ENCODE measurements at regions of chr6 and their contacts with region 1.

Region 1: GRCh38 chr6:42782622-42783176 is 847 bp downstream of the BICRAL start:
- DNase-seq: peak; percentile 65 to 96 (median 78)

Region 2: DNA sequence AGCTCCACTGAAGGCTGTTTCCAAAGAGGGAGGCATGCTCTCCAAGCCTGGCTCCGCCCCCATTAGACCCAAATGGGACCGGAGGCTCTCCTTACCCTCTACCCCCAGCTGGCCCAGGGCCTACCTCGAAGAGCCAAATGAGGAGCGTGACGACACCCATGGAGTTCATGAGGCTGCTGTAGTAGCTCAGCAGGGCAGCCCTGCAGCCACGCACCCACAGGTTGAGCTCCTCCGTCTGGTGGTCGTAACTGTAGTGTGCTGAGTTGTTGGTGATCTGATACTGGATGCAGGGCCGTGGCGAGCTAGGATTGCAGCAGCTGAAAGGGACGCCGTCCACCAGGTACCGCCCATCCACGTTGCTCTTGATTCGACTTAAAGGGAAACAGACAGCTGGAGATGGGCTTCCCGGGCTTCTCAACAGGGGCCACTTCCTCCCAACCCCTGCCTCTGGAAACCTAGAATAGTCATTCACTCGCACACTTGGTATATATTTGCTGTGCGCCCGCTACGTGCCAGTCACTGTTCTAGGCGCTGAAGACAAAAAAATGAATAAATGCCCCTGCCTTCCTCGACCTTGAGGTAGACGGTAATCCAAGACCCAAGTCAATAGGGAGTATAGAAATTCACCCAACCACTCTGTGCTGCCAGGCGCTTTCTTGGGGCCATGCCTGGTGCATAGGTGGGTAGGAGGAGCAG is 78.3 kb before region 1 on chr6:
- intact Hi-C with region 1: no loop called
- DNase-seq: peak in 5 of 10 donors; percentile 14 to 71 (median 38)

Region 3: DNA sequence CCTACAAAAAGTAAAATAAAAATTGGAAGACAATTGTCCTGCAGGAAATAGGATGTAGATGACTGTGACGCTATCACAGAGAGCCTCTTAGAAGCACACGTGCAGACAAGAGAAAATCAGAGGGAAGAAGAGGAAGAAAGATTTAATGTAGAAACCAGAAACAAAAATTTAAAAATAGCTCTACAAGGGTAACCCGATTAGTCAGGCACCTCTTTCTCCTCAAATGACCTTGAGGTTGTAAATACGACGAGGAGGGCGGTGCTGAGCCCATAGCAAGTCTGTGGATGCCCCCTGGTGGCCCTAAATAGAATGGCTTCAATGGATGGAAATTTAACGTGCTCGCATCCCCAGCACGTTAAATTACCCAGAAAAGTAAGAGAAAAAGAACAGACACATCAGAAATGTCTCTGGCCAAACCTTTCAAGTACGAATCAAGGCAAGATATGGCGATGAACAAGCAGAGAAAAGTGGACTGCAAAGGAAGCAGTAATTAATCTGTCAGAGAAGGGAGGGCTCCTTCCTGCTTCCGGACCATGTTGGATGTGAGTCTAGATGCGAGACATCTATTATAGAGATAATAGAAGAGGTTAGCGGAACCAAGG is 56.1 kb before region 1 on chr6:
- intact Hi-C with region 1: loop called (anchors 10 kb)
- DNase-seq: peak in 9 of 10 donors; percentile 22 to 92 (median 61)

Region 4: GRCh38 chr6:42745707-42746462 is 36.8 kb before region 1 on chr6 and contains the start of gene TBCC:
- intact Hi-C with region 1: loop called (anchors 1 kb)
- DNase-seq: peak; percentile 93 to 99 (median 96)

Region 5: GRCh38 chr6:42890311-42891198 is 107.9 kb after region 1 on chr6:
- intact Hi-C with region 1: loop called (anchors 10 kb)
- DNase-seq: peak; percentile 87 to 99 (median 94)

Measured in posterior cingulate gyrus (tissue), 11 donors.